Activated CD4-positive, alpha-beta memory T cell treated with anti-CD3 and anti-CD28 coated beads for 36 hours (primary cell): ENCODE measurements at regions of chr1 and their contacts with region 1.

Region 1: DNA sequence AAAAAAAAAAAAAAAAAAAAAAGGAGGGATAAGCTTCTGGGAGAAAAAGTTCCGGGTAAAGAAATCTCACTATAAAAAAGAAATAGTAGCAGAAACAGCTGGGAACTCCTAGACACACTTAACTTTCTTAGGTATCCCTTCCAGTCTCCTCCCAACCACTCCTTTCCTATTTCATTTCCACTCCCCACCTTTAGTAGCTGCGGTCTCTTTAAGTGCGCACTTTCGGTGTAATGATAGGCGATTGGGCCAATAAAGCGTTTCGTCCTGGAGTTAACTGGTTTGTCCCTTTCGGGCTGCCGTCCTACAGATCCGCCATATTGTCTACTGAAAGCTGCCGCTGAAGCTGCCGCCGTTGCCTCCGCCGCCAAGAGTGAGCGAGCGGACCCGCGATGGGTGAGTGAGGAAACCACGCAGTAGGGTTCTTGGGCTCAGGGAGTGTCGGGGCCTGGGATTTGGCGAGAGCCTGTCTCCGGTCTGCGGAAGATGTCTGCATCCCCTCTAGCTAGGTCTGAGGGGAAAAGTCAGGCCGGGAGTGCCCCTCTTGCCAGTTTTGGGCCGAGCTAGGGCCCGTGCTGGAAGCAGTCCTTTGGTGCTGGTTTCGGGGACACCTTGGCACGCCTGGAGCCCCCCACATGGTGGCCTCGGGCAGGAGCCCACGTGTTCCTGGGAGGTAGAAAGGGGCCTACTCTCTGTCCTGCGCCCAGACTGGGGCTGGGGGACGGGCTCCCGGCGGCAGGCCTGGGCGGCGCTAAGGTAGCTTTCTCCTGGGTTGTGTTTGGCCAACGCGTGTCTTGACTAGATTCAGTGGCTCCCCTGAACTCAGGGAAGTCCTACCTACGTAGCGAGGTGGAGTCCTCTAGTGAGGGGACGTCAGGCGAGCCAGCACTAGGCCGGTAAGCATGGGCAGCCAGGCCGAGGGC is at the start of gene KPNA6:
- DNase-seq: peak; percentile 95
- H3K4me3 Mint-ChIP-seq: peak within 1 kb of the TSS; percentile 100
- H3K27ac Mint-ChIP-seq: peak within 1 kb of the TSS; percentile 96
- H3K4me1 Mint-ChIP-seq: peaks cover 37% of the 10 kb centered on the region
- H3K27me3 Mint-ChIP-seq: no peaks in the 10 kb centered on the region
- total RNA-seq, gene KPNA6: 69.8 to 77.6 TPM

Region 2: GRCh38 chr1:31834501-31834900 is 273.5 kb before region 1 on chr1:
- CTCF ChIA-PET with region 1: no interaction called
- POLR2A ChIA-PET with region 1: no interaction called
- intact Hi-C with region 1: no loop called
- DNase-seq: peak; percentile 40
- H3K4me3 Mint-ChIP-seq: no peak overlapping the region
- H3K27ac Mint-ChIP-seq: no peak overlapping the region
- H3K4me1 Mint-ChIP-seq: peaks cover 6% of the 10 kb centered on the region
- H3K27me3 Mint-ChIP-seq: no peaks in the 10 kb centered on the region

Region 3: GRCh38 chr1:32122151-32122550 is 14.1 kb after region 1 on chr1:
- CTCF ChIA-PET with region 1: interaction called, 23 read pairs
- POLR2A ChIA-PET with region 1: interaction called, 7 read pairs
- intact Hi-C with region 1: no loop called
- DNase-seq: no peak
- H3K4me3 Mint-ChIP-seq: no peak overlapping the region
- H3K27ac Mint-ChIP-seq: no peak overlapping the region
- H3K4me1 Mint-ChIP-seq: peaks cover 44% of the 10 kb centered on the region
- H3K27me3 Mint-ChIP-seq: no peaks in the 10 kb centered on the region

Region 4: DNA sequence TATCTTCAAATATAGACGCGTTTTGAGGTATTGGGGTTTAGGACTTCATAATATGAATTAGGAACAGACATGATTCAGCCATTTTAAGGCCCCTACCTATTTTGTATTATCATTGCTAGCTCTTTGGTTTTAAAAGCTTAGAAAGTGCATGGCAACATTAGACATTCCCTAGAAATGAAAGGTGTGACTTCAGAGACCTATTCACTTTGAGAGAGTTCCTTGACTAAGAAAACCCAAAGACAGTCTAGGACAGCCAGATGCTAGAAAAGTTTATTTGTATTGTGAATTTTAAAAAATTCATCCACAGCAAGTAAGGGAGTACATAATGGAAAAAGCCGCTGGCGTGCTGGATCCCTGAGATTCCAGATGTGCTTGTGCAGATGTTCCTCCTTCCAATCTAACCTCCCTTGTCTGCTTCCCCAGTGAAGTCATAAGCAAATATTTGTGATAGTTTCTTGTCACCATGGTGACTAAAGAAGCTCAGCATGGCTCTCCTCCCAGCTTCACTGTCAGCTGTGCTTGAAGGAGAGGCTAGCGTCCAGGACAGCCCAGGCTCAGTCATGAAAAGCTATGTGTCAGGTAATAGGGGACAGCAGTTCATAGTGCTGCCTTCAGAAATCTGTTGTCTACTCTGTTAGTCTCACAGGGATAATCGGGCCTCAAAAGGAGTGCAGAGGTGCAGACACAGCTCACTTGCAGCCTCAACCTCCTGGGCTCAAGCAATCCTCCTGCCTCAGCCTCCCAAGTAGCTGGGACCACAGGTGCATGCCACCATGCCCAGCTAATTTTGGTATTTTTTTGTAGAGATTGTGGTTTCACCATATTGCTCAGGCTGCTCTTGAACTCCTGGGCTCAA is 34.7 kb after region 1 on chr1:
- CTCF ChIA-PET with region 1: interaction called, 3 read pairs
- POLR2A ChIA-PET with region 1: interaction called, 7 read pairs
- intact Hi-C with region 1: loop called (anchors 5 kb)
- DNase-seq: no peak
- H3K4me3 Mint-ChIP-seq: no peak overlapping the region
- H3K27ac Mint-ChIP-seq: no peak overlapping the region
- H3K4me1 Mint-ChIP-seq: peaks cover 61% of the 10 kb centered on the region
- H3K27me3 Mint-ChIP-seq: no peaks in the 10 kb centered on the region

Region 5: GRCh38 chr1:32179443-32180185 is 71.6 kb after region 1 on chr1 and contains the start of gene TXLNA:
- CTCF ChIA-PET with region 1: interaction called, 14 read pairs
- POLR2A ChIA-PET with region 1: interaction called, 20 read pairs
- intact Hi-C with region 1: loop called (anchors 1 kb)
- DNase-seq: peak; percentile 95
- H3K4me3 Mint-ChIP-seq: peak within 1 kb of the TSS; percentile 91
- H3K27ac Mint-ChIP-seq: peak within 1 kb of the TSS; percentile 96
- H3K4me1 Mint-ChIP-seq: peaks cover 38% of the 10 kb centered on the region
- H3K27me3 Mint-ChIP-seq: no peaks in the 10 kb centered on the region
- total RNA-seq, gene TXLNA: 77.4 to 78.2 TPM

Region 6: DNA sequence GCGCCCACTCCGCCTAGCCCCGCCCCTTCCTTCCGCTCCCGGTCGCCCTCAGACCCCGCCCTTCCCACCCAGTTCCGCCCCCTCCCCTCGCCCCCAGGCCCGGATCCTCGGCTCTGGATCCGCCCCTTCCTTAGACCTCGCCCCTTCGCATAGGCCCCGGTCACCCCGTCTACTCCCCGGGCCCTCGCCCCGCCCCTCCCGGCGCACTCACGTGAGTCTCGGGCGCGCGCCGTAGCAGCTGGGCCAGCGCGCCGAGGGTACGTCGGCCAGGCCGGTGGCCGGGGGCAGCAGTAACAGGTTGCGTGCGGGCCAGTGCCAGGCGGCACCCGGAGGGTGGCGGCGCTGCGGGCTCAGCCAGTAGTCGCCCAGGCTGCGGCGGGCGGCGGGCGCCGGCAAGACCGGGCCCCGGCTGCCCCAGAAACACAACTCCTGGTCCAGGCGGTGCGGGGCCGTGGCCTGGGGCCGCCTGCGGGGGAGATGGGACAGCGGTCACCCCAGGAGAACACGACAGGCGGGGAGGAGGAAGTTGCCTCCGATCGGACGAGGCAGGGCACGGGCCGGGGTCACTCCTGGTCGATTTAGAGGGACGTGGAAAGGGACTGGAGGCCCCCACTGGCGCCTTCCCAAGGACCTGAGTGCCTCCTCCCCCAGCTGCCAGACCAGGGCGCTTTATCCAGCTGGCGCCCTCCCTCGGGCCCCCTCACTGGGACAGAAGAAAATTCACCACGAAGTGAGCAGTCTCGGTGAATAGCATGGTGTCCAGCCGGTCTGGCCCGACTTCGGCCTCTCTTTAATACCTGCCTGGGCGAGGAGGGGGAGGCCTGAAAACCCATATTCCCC is 243.6 kb after region 1 on chr1:
- CTCF ChIA-PET with region 1: interaction called, 3 read pairs
- POLR2A ChIA-PET with region 1: no interaction called
- intact Hi-C with region 1: loop called (anchors 1 kb)
- DNase-seq: peak; percentile 95
- H3K4me3 Mint-ChIP-seq: peak overlapping the region; percentile 79
- H3K27ac Mint-ChIP-seq: peak overlapping the region; percentile 81
- H3K4me1 Mint-ChIP-seq: peaks cover 34% of the 10 kb centered on the region
- H3K27me3 Mint-ChIP-seq: no peaks in the 10 kb centered on the region